MCF 10A (cell line): ENCODE measurements at regions of chr14 and their contacts with region 1.

Region 1: GRCh38 chr14:34982417-34983147 is at the start of gene SRP54:
- DNase-seq: peak; percentile 98
- H3K4me3 Mint-ChIP-seq: no peak within 1 kb of the TSS
- H3K27ac Mint-ChIP-seq: no peak within 1 kb of the TSS
- H3K4me1 Mint-ChIP-seq: peaks cover 5% of the 10 kb centered on the region
- H3K27me3 Mint-ChIP-seq: no peaks in the 10 kb centered on the region
- CTCF ChIP-seq: no peak
- total RNA-seq, gene SRP54: 77.4 and 108 TPM in 2 replicates

Region 2: DNA sequence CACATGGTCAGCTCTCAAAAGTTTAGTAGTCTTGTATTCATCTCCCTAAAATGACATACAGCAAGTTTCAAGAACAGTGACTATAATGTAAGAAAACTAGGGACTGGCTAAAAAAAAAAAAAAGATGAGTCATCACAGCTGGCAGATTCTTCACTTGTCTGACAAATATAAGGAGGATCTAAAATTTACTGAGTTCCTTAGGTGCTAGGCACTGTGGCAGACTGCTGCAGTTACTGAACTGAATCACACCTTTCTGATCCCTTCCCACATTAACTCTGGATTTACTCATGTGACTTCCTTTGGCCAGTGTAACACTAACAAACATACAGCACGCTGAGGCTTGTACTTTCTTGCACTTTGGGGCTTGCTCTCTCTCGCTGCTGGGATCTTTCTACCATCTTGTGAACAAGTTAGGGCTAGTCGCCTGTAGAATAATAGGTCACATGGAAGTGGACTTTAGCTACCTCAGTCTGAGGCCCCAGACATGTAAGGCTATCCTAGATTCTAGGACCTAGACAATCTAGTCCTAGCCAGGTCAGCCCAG is 139.5 kb before region 1 on chr14:
- CTCF ChIA-PET with region 1: no interaction called
- POLR2A ChIA-PET with region 1: interaction called, 40 read pairs
- intact Hi-C with region 1: no loop called
- DNase-seq: peak; percentile 95
- H3K4me3 Mint-ChIP-seq: peak overlapping the region; percentile 51
- H3K27ac Mint-ChIP-seq: peak overlapping the region; percentile 66
- H3K4me1 Mint-ChIP-seq: peaks cover 22% of the 10 kb centered on the region
- H3K27me3 Mint-ChIP-seq: no peaks in the 10 kb centered on the region
- CTCF ChIP-seq: no peak

Region 3: GRCh38 chr14:34966413-34966812 is 16.2 kb before region 1 on chr14:
- CTCF ChIA-PET with region 1: no interaction called
- POLR2A ChIA-PET with region 1: interaction called, 10 read pairs
- intact Hi-C with region 1: no loop called
- DNase-seq: no peak
- H3K4me3 Mint-ChIP-seq: no peak overlapping the region
- H3K27ac Mint-ChIP-seq: no peak overlapping the region
- H3K4me1 Mint-ChIP-seq: peaks cover 2% of the 10 kb centered on the region
- H3K27me3 Mint-ChIP-seq: no peaks in the 10 kb centered on the region
- CTCF ChIP-seq: no peak

Region 4: GRCh38 chr14:34993426-34993825 is 10.8 kb after region 1 on chr14:
- CTCF ChIA-PET with region 1: no interaction called
- POLR2A ChIA-PET with region 1: interaction called, 25 read pairs
- intact Hi-C with region 1: no loop called
- DNase-seq: no peak
- H3K4me3 Mint-ChIP-seq: no peak overlapping the region
- H3K27ac Mint-ChIP-seq: no peak overlapping the region
- H3K4me1 Mint-ChIP-seq: peaks cover 10% of the 10 kb centered on the region
- H3K27me3 Mint-ChIP-seq: no peaks in the 10 kb centered on the region
- CTCF ChIP-seq: no peak

Region 5: DNA sequence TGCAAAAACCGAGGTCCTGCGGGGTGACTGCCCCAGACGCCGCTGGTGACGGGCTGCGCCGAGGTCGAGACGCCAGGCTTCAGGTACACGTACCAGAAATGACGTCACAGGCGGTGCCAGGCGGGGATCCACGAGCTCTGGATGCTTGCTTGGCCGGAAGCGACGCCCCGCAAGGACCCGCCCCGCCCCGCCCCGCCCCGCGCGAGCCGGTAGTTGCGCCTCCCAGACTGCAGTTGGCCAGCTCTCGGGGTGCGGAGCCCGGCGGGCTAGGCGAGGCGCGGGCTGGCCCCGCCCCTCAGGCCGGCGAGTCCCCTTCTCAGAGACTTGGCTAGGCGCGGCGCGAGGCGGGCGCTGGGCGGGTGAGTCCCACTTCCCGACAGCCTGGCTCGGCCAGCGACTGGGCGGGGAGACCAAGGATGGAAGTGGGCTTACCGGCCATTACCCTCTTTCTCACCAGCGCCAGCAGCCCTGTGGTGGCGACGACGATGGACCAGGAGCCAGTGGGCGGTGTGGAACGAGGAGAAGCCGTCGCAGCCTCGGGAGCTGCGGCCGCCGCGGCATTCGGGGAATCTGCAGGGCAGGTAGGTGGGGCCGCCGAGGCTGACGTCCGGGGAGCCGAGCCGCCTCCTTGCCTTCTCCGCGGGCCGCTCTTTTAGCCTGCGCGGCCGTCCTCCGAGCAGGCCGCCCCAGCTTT is 63.6 kb after region 1 on chr14 and contains the start of gene FAM177A1:
- CTCF ChIA-PET with region 1: interaction called, 4 read pairs
- POLR2A ChIA-PET with region 1: interaction called, 104 read pairs
- intact Hi-C with region 1: no loop called
- DNase-seq: peak; percentile 97
- H3K4me3 Mint-ChIP-seq: peak within 1 kb of the TSS; percentile 94
- H3K27ac Mint-ChIP-seq: peak within 1 kb of the TSS; percentile 98
- H3K4me1 Mint-ChIP-seq: peaks cover 24% of the 10 kb centered on the region
- H3K27me3 Mint-ChIP-seq: no peaks in the 10 kb centered on the region
- CTCF ChIP-seq: no peak
- total RNA-seq, gene FAM177A1: 73.9 and 74.6 TPM in 2 replicates

Region 6: GRCh38 chr14:35121887-35122695 is 139.5 kb after region 1 on chr14 and contains the starts of genes PPP2R3C and PRORP:
- CTCF ChIA-PET with region 1: interaction called, 4 read pairs
- POLR2A ChIA-PET with region 1: interaction called, 85 read pairs
- intact Hi-C with region 1: loop called (anchors 1 kb)
- DNase-seq: peak; percentile 99
- H3K4me3 Mint-ChIP-seq: peak within 1 kb of the TSS; percentile 98
- H3K27ac Mint-ChIP-seq: peak within 1 kb of the TSS; percentile 100
- H3K4me1 Mint-ChIP-seq: peaks cover 31% of the 10 kb centered on the region
- H3K27me3 Mint-ChIP-seq: no peaks in the 10 kb centered on the region
- CTCF ChIP-seq: no peak
- total RNA-seq, gene PPP2R3C: 16.9 and 21.6 TPM in 2 replicates
- total RNA-seq, gene PRORP: 27.9 and 30.5 TPM in 2 replicates